Naive thymus-derived CD4-positive, alpha-beta T cell (primary cell): ENCODE measurements at regions of chr17 and their contacts with region 1.

Region 1: DNA sequence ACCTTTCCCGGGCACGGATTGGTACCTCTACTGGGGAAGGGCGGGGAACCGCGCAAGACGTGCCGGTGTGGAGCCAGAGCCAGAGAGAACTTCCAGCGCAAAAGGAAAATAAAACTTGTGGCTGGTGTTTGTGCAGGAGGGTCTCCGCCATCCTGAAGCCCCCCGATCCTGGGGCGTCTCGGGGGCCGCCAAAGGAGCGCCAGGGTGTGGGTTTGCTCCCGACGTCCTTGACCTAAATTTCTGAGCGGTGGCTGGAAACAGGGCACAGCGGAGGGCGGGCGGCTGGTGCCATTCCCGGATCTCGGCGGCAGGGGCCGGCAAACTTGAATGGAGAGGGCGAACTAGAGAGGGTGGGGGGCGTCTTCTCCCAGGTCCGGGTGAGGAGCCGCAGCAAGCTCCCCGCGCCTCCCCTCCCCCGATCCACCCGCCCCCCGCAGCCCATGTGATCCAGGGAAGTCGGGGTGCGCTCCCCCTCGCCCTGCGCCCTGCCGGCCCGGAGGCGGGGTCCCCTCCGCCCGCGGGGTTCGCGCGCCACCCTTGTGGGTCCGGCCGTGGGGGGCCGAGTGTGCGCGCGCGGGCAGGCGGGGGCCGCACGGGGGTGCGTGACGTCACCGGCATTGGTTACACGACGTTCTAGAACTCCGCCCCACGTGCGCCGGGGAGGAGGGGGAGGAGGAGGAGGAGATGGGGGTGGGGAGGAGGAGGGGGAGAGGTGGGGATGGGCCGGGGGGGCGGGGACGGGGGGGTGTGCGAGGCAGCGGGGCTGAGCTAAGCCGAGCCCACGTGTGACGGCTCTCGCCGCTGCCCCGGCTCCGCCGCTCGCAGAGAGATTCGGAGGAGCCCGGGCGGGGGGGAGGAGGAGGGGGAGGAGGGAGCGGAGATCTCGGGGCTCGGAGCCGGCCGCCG is at the start of gene MSI2:
- DNase-seq: peak; percentile 80 to 93 (median 85)
- ATAC-seq: peak; percentile 89
- H3K4me3 ChIP-seq: peak within 1 kb of the TSS; percentile 87
- H3K4me3 Mint-ChIP-seq: peak within 1 kb of the TSS; percentile 90 to 100 (median 96)
- H3K27ac ChIP-seq: peak within 1 kb of the TSS; percentile 83
- H3K27ac Mint-ChIP-seq: peak within 1 kb of the TSS; percentile 85 to 98 (median 91)
- H3K4me1 ChIP-seq: peaks cover 13 to 28% of the 10 kb centered on the region in 2 donors
- H3K4me1 Mint-ChIP-seq: peaks cover 21 to 57% (median 46%) of the 10 kb centered on the region in 7 donors
- H3K27me3 ChIP-seq: no peaks in the 10 kb centered on the region
- H3K27me3 Mint-ChIP-seq: peaks cover 0 to 4% (median 0%) of the 10 kb centered on the region in 5 donors
- total RNA-seq, gene MSI2: 111 to 169 (median 150) TPM

Region 2: DNA sequence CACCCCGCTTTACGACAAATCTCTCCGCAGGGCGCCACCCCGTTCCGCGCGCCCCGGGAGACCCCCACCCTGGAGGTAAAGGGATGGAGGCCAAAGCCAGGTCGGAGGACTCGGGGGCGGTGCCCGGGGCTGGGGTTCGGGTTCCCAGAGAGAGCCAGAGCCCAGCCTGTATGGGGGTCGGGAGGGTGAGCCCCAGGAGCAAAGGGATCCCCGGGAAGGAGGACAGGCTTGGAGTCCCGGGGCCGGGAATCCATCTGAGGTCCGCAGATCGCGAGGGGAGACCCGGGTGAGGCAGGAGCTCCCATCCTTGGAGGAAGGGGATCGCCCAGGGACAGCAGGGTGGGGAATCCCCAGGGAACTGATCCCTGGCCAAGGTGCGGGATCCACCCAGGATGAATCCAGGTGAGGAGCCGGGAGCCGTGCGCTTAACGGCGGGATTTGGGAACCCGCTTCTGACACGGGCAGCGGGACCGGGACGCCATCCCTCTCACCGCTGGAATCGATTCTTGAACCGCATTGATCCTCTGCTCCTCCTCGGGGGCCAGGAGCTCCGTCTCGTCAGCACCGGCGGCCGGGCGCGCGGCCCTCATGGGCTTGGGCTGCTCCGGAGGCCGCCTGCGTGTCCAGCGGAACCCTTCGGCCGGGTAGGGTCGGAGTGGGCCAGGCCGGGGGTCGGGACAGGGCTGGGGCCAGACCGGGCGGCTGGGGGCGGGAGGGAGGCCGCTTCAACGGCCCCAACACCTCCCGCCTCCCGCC is 1834.7 kb before region 1 on chr17 and contains the start of gene MMD:
- CTCF ChIA-PET with region 1: no interaction called
- POLR2A ChIA-PET with region 1: no interaction called
- intact Hi-C with region 1: loop called in 1 of 2 experiments (anchors 10 kb)
- DNase-seq: peak in 6 of 9 donors; percentile 12 to 50 (median 24)
- ATAC-seq: no peak
- H3K4me3 ChIP-seq: peak within 1 kb of the TSS; percentile 89
- H3K4me3 Mint-ChIP-seq: peak within 1 kb of the TSS; percentile 89 to 96 (median 90)
- H3K27ac ChIP-seq: peak within 1 kb of the TSS; percentile 87
- H3K27ac Mint-ChIP-seq: peak within 1 kb of the TSS; percentile 83 to 98 (median 94)
- H3K4me1 ChIP-seq: peaks cover 11 to 21% of the 10 kb centered on the region in 2 donors
- H3K4me1 Mint-ChIP-seq: peaks cover 32 to 47% (median 43%) of the 10 kb centered on the region in 7 donors
- H3K27me3 ChIP-seq: no peaks in the 10 kb centered on the region
- H3K27me3 Mint-ChIP-seq: peaks cover 8 to 30% (median 19%) of the 10 kb centered on the region in 5 donors
- total RNA-seq, gene MMD: 6.6 to 35.3 (median 11.2) TPM

Region 3: GRCh38 chr17:57084802-57085447 is 171.1 kb before region 1 on chr17 and contains the start of gene AKAP1:
- CTCF ChIA-PET with region 1: no interaction called
- POLR2A ChIA-PET with region 1: no interaction called
- intact Hi-C with region 1: loop called (anchors 1 to 2 kb)
- DNase-seq: peak; percentile 91 to 98 (median 97)
- ATAC-seq: peak; percentile 95
- H3K4me3 ChIP-seq: peak within 1 kb of the TSS; percentile 96
- H3K4me3 Mint-ChIP-seq: peak within 1 kb of the TSS; percentile 89 to 95 (median 92)
- H3K27ac ChIP-seq: peak within 1 kb of the TSS; percentile 91
- H3K27ac Mint-ChIP-seq: peak within 1 kb of the TSS; percentile 86 to 95 (median 93)
- H3K4me1 ChIP-seq: peaks cover 9 to 12% of the 10 kb centered on the region in 2 donors
- H3K4me1 Mint-ChIP-seq: peaks cover 27 to 43% (median 34%) of the 10 kb centered on the region in 7 donors
- H3K27me3 ChIP-seq: no peaks in the 10 kb centered on the region
- H3K27me3 Mint-ChIP-seq: peaks cover 0 to 12% (median 0%) of the 10 kb centered on the region in 5 donors
- total RNA-seq, gene AKAP1: 22.2 to 35.8 (median 34.3) TPM

Region 4: DNA sequence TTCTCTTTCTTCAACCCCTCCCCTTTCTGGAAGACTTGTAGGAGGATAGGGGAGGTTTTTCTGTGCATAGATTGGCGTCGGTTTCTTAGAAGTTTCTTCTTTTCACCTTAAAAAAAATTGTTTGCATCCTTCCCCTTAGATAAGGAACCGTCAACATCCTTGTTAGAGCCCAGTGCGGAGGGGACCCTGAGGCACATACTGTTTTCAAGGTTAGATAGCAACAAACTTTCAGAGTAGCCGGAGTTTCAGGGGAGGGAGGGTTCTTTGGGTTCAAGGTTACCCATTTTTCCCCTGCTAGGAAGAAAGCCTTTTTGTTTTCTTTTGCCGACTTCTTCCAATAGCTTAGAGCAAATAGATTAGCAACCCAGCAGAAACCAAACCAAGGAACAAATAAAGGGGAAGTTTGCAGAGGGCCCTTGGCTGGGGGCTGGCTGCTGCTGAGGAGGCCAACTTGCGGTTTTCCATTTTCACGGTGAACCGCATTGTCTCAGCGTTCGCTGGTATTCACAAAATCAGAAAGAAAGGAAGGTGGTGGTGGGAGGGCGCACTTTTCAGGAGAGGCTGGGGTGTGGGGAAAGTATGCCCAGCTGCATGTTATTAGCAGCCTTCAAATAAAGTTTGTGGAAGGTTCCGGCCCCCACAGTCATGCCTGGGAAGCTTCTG is 29.1 kb after region 1 on chr17:
- CTCF ChIA-PET with region 1: no interaction called
- POLR2A ChIA-PET with region 1: interaction called, 3 read pairs
- intact Hi-C with region 1: loop called (anchors 1 to 2 kb)
- DNase-seq: peak in 8 of 9 donors; percentile 4 to 75 (median 16)
- ATAC-seq: peak; percentile 75
- H3K4me3 ChIP-seq: peak overlapping the region; percentile 20
- H3K4me3 Mint-ChIP-seq: peak overlapping the region; percentile 70 to 85 (median 75)
- H3K27ac ChIP-seq: peak overlapping the region; percentile 18
- H3K27ac Mint-ChIP-seq: peak overlapping the region; percentile 55 to 93 (median 79)
- H3K4me1 ChIP-seq: peaks cover 24 to 34% of the 10 kb centered on the region in 2 donors
- H3K4me1 Mint-ChIP-seq: peaks cover 60 to 90% (median 88%) of the 10 kb centered on the region in 7 donors
- H3K27me3 ChIP-seq: no peaks in the 10 kb centered on the region
- H3K27me3 Mint-ChIP-seq: no peaks in the 10 kb centered on the region

Region 5: GRCh38 chr17:57415751-57416207 is 159.8 kb after region 1 on chr17:
- CTCF ChIA-PET with region 1: no interaction called
- POLR2A ChIA-PET with region 1: no interaction called
- intact Hi-C with region 1: no loop called
- DNase-seq: no peak
- ATAC-seq: no peak
- H3K4me3 ChIP-seq: no peak overlapping the region
- H3K4me3 Mint-ChIP-seq: no peak overlapping the region
- H3K27ac ChIP-seq: no peak overlapping the region
- H3K27ac Mint-ChIP-seq: peak overlapping the region in 1 of 9 donors; percentile 18
- H3K4me1 ChIP-seq: no peaks in the 10 kb centered on the region
- H3K4me1 Mint-ChIP-seq: peaks cover 12 to 36% (median 29%) of the 10 kb centered on the region in 7 donors
- H3K27me3 ChIP-seq: no peaks in the 10 kb centered on the region
- H3K27me3 Mint-ChIP-seq: no peaks in the 10 kb centered on the region

Region 6: DNA sequence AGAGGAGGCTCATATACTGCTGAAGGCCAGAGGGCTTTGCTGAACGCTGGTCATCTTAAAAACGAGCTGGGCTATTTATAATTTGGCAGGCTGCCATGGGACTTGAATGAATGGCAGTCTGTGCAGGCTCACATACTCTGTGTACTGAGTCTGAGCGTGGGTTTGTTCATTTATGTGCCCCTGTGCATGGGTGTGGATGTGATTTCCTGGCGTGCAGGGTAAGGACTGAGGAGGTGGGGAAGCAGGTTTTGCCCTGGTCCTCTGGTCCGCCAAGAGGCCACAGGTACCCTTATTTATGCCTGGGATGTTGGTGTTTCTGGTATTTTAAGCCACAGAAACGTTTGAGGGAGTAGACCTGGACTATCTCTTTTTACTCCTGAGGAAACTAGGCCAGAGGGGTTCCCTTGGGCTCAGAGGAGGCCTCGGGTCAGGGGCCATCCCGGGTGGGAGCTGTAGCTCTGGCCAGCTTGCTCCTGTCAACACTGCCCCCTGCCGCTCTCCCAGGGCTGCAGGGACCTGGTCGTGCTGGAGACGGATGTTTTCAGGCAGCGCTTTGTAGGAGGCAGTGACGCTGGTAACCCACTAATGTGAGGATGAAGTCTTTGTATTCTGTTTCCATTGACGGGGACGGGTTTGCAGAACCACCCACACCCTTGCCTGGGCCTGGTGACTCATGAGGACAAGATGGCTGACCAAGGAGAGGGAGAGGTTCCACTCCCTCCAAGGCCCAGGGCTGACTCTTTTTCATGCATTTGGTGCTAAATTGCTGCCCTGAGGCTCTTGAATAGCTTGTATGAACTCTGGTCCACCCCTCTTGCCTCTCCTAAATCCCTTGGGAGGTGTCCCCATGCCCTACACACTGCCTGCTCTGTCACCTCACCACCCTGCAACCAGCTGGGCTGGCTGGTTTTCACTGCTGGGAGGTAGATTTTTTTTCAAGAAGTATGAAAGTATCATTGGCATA is 184.8 kb after region 1 on chr17:
- CTCF ChIA-PET with region 1: no interaction called
- POLR2A ChIA-PET with region 1: interaction called, 4 read pairs
- intact Hi-C with region 1: loop called (anchors 1 to 2 kb)
- DNase-seq: peak; percentile 26 to 82 (median 70)
- ATAC-seq: peak; percentile 88
- H3K4me3 ChIP-seq: no peak overlapping the region
- H3K4me3 Mint-ChIP-seq: peak overlapping the region; percentile 36 to 78 (median 52)
- H3K27ac ChIP-seq: peak overlapping the region; percentile 36
- H3K27ac Mint-ChIP-seq: peak overlapping the region; percentile 81 to 96 (median 92)
- H3K4me1 ChIP-seq: peaks cover 31 to 39% of the 10 kb centered on the region in 2 donors
- H3K4me1 Mint-ChIP-seq: peaks cover 58 to 87% (median 81%) of the 10 kb centered on the region in 7 donors
- H3K27me3 ChIP-seq: no peaks in the 10 kb centered on the region
- H3K27me3 Mint-ChIP-seq: no peaks in the 10 kb centered on the region

Region 7: GRCh38 chr17:57671667-57672632 is 415.9 kb after region 1 on chr17:
- CTCF ChIA-PET with region 1: no interaction called
- POLR2A ChIA-PET with region 1: no interaction called
- intact Hi-C with region 1: loop called in 1 of 2 experiments (anchors 5 kb)
- DNase-seq: peak; percentile 47 to 73 (median 61)
- ATAC-seq: peak; percentile 92
- H3K4me3 ChIP-seq: peak overlapping the region; percentile 31
- H3K4me3 Mint-ChIP-seq: peak overlapping the region in 5 of 10 donors; percentile 10 to 61 (median 29)
- H3K27ac ChIP-seq: no peak overlapping the region
- H3K27ac Mint-ChIP-seq: peak overlapping the region; percentile 10 to 84 (median 74)
- H3K4me1 ChIP-seq: peaks cover 6 to 29% of the 10 kb centered on the region in 2 donors
- H3K4me1 Mint-ChIP-seq: peaks cover 0 to 26% (median 14%) of the 10 kb centered on the region in 7 donors
- H3K27me3 ChIP-seq: no peaks in the 10 kb centered on the region
- H3K27me3 Mint-ChIP-seq: no peaks in the 10 kb centered on the region

Region 8: GRCh38 chr17:58082870-58083490 is 827.0 kb after region 1 on chr17 and contains the start of gene DYNLL2:
- CTCF ChIA-PET with region 1: no interaction called
- POLR2A ChIA-PET with region 1: no interaction called
- intact Hi-C with region 1: loop called in 1 of 2 experiments (anchors 10 kb)
- DNase-seq: peak; percentile 74 to 88 (median 87)
- ATAC-seq: peak; percentile 91
- H3K4me3 ChIP-seq: peak within 1 kb of the TSS; percentile 88
- H3K4me3 Mint-ChIP-seq: peak within 1 kb of the TSS; percentile 88 to 95 (median 92)
- H3K27ac ChIP-seq: peak within 1 kb of the TSS; percentile 94
- H3K27ac Mint-ChIP-seq: peak within 1 kb of the TSS; percentile 81 to 95 (median 90)
- H3K4me1 ChIP-seq: peaks cover 23 to 34% of the 10 kb centered on the region in 2 donors
- H3K4me1 Mint-ChIP-seq: peaks cover 26 to 40% (median 34%) of the 10 kb centered on the region in 7 donors
- H3K27me3 ChIP-seq: no peaks in the 10 kb centered on the region
- H3K27me3 Mint-ChIP-seq: peaks cover 0 to 31% (median 0%) of the 10 kb centered on the region in 5 donors
- total RNA-seq, gene DYNLL2: 30.1 to 39.1 (median 35.1) TPM